Activated T-helper 1 cell treated with anti-CD3 and anti-CD28 coated beads, Interleukin-12 subunit alpha, Interleukin-12 subunit beta, Interleukin-2, Interleukin-4 antibody, amounts not matched to agents 30 ng/mL and 10 ng/mL and 1 ng/mL, durations not matched to agents 14 hours and 24 hours and 36 hours (primary cell): ENCODE measurements at regions of chr17 and their contacts with region 1.

Region 1: DNA sequence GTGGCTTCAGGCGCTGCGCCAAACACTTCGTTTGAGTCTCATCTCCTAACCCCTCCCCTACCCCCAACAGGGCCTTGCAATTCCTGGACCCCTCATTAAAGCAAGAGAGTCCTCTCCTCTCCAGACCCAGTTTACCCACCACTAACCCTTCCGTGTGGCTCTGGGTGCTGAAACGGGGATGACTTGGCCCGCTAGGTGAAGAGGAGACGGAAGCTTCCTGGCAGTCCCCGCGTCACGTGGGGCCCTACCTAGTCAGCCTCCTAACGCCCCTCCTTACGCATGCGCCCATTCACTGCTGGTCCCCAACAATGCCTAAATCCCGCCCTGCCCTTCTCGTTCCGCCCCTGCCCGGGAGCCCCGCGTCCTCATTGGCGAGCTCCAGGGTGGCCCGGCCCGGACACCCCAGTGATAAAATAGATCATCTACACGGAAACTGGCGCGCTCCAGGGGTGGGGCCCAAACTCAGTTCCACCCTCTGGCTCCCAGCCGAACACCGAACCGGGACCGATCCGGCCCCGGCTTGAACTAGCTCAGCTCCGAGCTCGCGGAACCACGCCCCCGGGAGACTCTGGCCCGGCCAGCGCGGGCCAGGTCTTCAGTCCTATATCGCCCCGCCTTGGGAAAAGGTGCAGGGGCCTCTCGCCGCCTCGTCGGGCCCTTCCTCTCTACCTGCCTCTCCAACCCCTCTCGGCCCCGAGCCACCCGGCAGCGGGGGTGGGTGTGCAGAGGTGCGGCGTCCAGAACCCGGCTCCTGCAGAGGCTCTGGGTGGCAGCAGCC is at the start of gene SLC16A13:
- DNase-seq: peak; percentile 99
- H3K4me3 Mint-ChIP-seq: peak within 1 kb of the TSS; percentile 95
- H3K27ac Mint-ChIP-seq: peak within 1 kb of the TSS; percentile 93
- H3K4me1 Mint-ChIP-seq: peaks cover 62% of the 10 kb centered on the region
- H3K27me3 Mint-ChIP-seq: no peaks in the 10 kb centered on the region
- total RNA-seq, gene SLC16A13: 14.3 and 14.8 TPM in 2 replicates

Region 2: GRCh38 chr17:6701719-6702118 is 334.1 kb before region 1 on chr17:
- intact Hi-C with region 1: no loop called
- DNase-seq: no peak
- H3K4me3 Mint-ChIP-seq: no peak overlapping the region
- H3K27ac Mint-ChIP-seq: no peak overlapping the region
- H3K4me1 Mint-ChIP-seq: no peaks in the 10 kb centered on the region
- H3K27me3 Mint-ChIP-seq: peaks cover 11% of the 10 kb centered on the region

Region 3: GRCh38 chr17:7014261-7014994 is 21.4 kb before region 1 on chr17:
- intact Hi-C with region 1: loop called (anchors 1 kb)
- DNase-seq: peak; percentile 98
- H3K4me3 Mint-ChIP-seq: peak overlapping the region; percentile 99
- H3K27ac Mint-ChIP-seq: peak overlapping the region; percentile 99
- H3K4me1 Mint-ChIP-seq: peaks cover 68% of the 10 kb centered on the region
- H3K27me3 Mint-ChIP-seq: peaks cover 6% of the 10 kb centered on the region

Region 4: DNA sequence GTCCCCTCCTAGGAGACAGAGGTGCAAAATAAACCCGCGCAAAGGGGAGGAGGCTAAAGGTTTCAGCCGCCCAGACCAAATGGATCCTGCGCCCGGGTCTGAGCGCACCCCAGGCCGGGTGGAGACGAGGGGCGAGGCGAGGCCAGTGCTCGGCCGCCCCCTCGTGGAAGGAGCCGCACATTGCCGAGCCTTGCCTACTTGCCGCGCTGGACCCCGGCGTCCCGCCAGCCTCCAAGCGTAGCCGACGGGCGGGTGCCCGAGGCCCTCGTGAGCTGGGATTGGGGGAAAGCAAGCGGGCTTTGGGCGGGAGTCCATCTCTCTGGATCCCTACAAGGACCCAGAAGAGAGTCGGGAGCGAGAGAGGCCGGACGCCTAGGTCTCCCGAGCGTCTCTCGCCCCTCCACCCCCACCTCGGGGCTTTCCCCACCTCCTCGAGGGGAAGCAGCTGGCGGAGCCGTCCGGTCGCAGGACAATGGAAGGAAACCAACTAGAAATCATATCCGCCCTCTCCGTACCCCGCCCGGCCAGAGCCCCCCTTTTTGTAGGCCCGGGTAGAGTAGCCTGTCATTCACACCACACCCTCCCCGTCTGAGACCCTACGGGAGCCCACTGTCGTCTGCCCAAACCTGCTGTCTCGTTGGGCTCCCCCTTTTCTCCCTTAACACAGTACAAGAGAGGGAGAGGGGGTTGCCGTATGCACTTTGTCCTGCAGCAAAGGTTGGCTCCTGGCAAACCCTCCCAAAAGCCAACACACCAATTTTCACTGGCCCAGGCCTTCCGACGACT is 13.6 kb before region 1 on chr17:
- intact Hi-C with region 1: loop called (anchors 1 kb)
- DNase-seq: peak; percentile 78
- H3K4me3 Mint-ChIP-seq: peak overlapping the region; percentile 74
- H3K27ac Mint-ChIP-seq: peak overlapping the region; percentile 87
- H3K4me1 Mint-ChIP-seq: peaks cover 68% of the 10 kb centered on the region
- H3K27me3 Mint-ChIP-seq: peaks cover 3% of the 10 kb centered on the region

Region 5: GRCh38 chr17:7045909-7046724 is 10.3 kb after region 1 on chr17:
- intact Hi-C with region 1: loop called (anchors 1 kb)
- DNase-seq: no peak
- H3K4me3 Mint-ChIP-seq: peak overlapping the region; percentile 66
- H3K27ac Mint-ChIP-seq: peak overlapping the region; percentile 72
- H3K4me1 Mint-ChIP-seq: peaks cover 20% of the 10 kb centered on the region
- H3K27me3 Mint-ChIP-seq: peaks cover 8% of the 10 kb centered on the region

Region 6: DNA sequence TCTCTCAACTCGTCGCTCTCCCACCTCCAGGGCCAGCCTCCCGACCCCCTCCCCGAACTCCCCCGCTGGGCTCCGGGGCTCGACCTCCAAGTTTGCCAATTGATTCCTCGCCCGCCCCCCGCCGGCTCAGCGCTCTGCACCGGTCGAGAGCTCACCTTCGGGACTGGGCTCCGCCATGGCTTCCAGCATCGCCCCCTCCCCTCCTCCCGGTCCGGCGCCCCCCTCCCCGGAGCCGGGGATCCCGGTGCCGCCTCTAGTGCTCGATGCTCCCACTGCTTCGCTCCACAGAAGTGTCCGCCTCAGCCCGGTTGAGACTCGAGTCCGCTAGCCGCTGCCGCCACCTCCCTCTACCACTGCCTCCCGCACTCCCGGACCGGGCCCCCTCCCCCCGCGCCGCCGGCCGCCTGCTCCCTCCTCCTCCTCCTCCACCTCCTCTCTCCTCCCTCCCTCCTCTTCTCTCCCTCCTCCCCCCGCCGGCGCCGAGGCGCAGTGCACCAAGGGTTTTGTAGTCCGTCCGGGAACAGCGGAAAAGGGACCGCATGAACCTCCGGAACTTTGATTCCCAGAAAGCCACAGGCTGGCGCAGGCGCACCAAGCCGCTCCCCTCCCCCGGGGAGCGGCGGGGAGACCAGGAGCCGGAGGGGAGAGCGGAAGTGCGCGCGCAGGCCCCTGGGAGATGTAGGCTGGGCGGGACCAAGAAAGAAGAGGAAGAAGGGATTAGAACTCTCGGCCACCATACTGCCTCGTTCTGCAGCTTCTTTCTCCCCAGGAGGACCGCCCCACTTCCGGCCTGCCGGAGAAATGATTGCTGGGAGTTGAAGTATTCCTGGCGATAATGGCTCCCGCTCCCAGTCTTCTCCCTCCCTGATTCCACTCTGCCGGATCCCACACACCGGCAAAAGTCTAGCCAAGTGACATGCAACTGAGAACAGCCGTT is 203.6 kb after region 1 on chr17 and contains the start of gene PHF23:
- intact Hi-C with region 1: loop called (anchors 2 kb)
- DNase-seq: peak; percentile 98
- H3K4me3 Mint-ChIP-seq: peak within 1 kb of the TSS; percentile 97
- H3K27ac Mint-ChIP-seq: peak within 1 kb of the TSS; percentile 94
- H3K4me1 Mint-ChIP-seq: peaks cover 68% of the 10 kb centered on the region
- H3K27me3 Mint-ChIP-seq: no peaks in the 10 kb centered on the region
- total RNA-seq, gene PHF23: 52.5 and 55.4 TPM in 2 replicates

Region 7: DNA sequence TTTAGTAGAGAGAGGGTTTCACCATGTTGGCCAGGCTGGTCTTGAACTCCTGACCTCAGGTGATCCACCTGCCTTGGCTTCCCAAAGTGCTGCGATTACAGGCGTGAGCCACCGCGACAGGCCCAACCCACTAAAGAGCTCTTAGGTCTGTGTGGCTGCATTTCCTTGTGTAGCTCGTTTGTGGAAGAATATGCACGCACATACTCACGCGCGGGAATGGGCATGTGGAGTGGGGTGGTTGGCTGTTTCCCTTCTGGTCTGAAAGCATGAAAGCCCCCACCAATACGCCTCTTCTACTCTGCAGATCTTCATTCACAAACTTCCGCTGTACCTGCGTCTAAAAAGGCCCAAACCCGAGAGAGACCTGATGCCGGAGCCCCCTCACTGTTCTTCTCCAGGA is 419.2 kb after region 1 on chr17:
- intact Hi-C with region 1: loop called (anchors 5 kb)
- DNase-seq: no peak
- H3K4me3 Mint-ChIP-seq: peak overlapping the region; percentile 87
- H3K27ac Mint-ChIP-seq: peak overlapping the region; percentile 88
- H3K4me1 Mint-ChIP-seq: peaks cover 31% of the 10 kb centered on the region
- H3K27me3 Mint-ChIP-seq: no peaks in the 10 kb centered on the region